ENCODE measurements at regions of chr11 and their contacts with region 1.

Region 1: GRCh38 chr11:32861850-32862577 is 30.6 kb upstream of the QSER1 start:
- DNase-seq: no peak
- ATAC-seq: no peak
- H3K4me3 ChIP-seq: no peak overlapping the region
- H3K4me1 ChIP-seq: no peaks in the 10 kb centered on the region
- CTCF ChIP-seq: no peak

Region 2: DNA sequence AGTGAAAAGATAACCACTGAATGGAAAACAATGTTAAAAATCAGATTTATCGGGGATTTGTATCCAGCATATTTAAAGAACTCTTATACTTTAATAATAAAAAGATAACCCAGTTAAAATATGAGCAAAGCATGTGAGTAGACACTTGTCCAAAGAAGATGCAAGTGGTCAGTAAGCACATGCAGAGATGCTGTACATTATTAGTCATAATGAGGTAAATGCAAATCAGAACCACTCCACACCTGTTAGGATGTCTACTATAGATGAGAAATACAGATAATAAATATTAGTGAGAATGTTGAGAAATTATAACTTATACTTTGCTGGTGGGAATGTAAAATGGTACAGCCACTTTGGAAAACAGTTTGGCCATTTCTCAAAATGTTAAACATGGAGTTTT is 58.6 kb after region 1 on chr11:
- intact Hi-C with region 1: loop called in 1 of 2 experiments (anchors 10 kb)
- DNase-seq: no peak
- ATAC-seq: no peak
- H3K4me3 ChIP-seq: no peak overlapping the region
- H3K4me1 ChIP-seq: no peaks in the 10 kb centered on the region
- CTCF ChIP-seq: no peak